ENCODE measurements at regions of chr3 and their contacts with region 1.

Region 1: DNA sequence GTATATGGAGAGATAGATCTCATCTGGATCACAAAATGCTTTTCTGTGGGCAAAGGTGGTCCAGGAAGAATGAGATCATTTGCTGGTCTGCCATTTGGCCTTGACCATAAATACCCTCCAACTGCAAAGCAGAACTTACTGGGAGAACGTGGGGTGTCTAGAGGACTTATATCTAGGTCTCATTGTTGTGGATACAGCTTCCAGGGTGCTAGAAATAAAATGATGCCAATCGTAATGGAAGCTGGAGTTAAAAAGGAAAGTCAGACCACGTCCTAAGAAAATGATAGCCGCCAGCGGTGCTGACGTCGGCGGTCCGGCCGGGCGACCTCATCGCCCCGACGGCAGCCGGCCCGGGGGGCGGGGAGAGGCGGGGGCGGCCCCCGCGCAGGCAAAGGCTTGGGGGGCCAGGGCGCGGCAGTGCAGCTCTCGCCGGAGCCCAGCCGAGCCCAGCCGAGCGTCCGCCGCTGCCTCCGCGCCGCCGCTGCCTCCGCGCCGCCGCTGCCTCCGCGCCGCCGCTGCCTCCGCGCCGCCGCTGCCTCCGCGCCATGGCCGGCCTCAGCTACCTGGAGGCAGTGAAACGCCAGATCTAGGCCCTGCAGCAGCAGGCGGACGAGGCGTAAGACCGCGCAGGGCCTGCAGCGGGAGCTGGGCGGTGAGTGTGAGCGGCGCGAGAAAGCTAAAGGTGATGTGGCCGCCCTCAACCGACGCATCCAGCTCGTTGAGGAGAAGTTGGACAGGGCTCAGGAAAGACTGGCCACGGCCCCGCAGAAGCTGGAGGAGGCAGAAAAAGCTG is 89.5 kb downstream of the EOMES start:
- DNase-seq: peak; percentile 52 to 80
- ATAC-seq: peak; percentile 91 to 94
- H3K4me3 ChIP-seq: peak overlapping the region; percentile 53
- H3K27ac ChIP-seq: peak overlapping the region; percentile 93 to 97
- H3K4me1 ChIP-seq: peaks cover 41% of the 10 kb centered on the region
- CTCF ChIP-seq: no peak
- EP300 ChIP-seq: no peak
- POLR2A ChIP-seq: peak; percentile 43
- RAD21 ChIP-seq: no peak

Region 2: GRCh38 chr3:27533718-27534573 is 98.7 kb before region 1 on chr3:
- CTCF ChIA-PET with region 1: interaction called, 4 read pairs
- POLR2A ChIA-PET with region 1: interaction called, 21 read pairs
- DNase-seq: peak; percentile 95 to 98
- ATAC-seq: peak; percentile 95 to 96
- H3K4me3 ChIP-seq: peak overlapping the region; percentile 21; the same call in 1 of the 3 replicates
- H3K27ac ChIP-seq: peak overlapping the region; percentile 93 to 95
- H3K4me1 ChIP-seq: peaks cover 42% of the 10 kb centered on the region
- CTCF ChIP-seq: no peak
- EP300 ChIP-seq: peak; percentile 88 to 97; a peak in 4 of 5 replicates
- POLR2A ChIP-seq: no peak
- RAD21 ChIP-seq: peak; percentile 66 to 68

Measured in A549 (cell line).